Activated CD4-positive, alpha-beta T cell treated with anti-CD3 and anti-CD28 coated beads, Interleukin-2, amount 10 ng/mL, durations not matched to agents 24 days and 14 days (primary cell): ENCODE measurements at regions of chr9 and their contacts with region 1.

Region 1: DNA sequence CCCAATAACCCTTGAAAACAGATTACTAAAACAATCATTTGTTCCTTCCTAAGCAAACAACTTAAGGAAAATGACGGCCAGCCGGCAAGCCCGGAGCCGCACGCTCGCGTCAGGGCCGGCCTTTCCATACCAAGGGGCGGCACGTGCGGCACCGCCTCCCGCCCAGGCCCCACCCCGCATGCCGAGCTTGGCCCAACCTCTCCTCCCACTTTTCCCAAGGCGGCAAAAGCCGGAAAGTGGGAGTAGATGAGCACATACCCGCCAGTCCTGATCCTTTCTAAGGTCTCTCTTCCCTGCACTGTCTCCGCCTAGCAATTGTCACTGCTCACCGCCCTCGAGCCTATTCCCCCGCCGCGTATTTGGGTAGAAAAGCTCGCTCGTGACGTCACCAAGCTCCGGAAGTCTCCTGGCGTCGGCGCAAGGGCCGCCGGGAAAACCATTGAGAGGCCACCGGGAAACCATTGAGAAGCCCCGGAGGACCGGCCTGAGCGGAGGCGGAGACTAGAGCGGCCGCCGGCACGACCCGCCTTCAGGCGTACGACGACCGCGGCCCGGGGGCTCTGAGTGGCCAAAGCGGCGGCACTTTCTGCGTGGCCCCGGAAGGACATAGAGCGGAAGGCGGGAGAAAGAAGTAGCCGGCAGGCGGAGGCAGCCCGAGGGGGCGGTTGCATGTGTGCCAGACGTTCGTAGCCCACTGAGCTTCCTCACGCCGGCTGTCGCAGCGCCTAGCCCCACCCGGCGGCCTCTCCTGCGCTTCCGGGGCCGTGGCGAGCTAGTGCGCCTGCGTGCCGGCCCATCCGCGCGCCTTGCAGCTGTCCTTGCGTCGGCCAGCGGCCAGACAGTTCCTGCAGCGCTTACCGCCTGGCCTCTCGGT is at the starts of genes NCBP1 and TSTD2:
- DNase-seq: peak; percentile 99
- H3K4me3 Mint-ChIP-seq: peak within 1 kb of the TSS; percentile 95
- H3K27ac Mint-ChIP-seq: peak within 1 kb of the TSS; percentile 99
- H3K4me1 Mint-ChIP-seq: peaks cover 40% of the 10 kb centered on the region
- H3K27me3 Mint-ChIP-seq: no peaks in the 10 kb centered on the region
- total RNA-seq, gene NCBP1: 48.9 and 51.4 TPM in 2 replicates
- total RNA-seq, gene TSTD2: 17.1 and 17.7 TPM in 2 replicates

Region 2: DNA sequence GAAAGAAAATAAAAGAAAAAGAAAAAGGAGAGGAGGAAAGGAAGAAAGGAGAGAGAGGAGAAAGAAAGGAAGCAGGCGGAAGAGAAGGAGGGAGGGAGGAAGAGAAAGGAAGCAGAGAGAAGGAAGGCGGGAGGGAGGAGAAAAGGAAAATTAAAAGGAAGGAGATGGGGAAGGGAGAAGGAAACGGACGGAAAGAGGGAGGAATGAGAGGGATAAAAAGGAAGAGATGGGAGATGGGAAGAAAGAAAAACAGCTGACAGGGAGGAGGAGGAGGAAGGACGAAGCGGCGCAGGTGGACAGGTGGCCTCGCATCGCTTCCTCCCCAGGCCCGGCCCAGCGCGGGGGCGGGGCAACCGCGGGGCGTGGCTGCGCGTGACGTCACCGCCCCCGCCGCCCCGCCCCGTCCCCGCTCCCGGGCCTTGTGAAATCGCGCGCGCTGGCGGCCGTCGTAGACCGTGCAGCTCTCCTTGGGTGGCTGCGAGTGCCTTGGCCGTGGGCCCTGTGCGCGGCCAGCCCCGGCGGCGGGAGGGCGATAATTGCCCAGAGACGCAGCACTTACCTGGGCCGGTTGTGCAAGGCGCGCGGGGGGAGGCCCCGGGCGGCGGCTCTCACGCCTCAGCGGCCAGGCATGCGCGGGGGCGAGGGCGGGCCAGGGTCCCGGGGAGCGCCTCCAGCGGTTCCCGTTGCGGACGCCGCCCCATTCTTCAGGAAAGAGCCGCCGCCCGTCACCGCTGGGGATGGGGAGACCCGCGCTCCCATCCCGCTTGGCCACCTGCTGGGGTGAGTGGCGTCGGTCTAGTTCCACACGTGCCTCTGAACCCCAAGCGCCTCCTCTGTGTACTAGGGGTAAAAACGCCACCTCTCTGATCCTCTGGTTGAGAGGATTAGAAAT is 170.2 kb after region 1 on chr9:
- intact Hi-C with region 1: loop called (anchors 10 kb)
- DNase-seq: peak; percentile 92
- H3K4me3 Mint-ChIP-seq: peak overlapping the region; percentile 88
- H3K27ac Mint-ChIP-seq: peak overlapping the region; percentile 68
- H3K4me1 Mint-ChIP-seq: peaks cover 8% of the 10 kb centered on the region
- H3K27me3 Mint-ChIP-seq: peaks cover 40% of the 10 kb centered on the region